ENCODE measurements at regions of chr4 and their contacts with region 1.

Region 1: GRCh38 chr4:85147439-85148076 is 181.1 kb upstream of the WDFY3 start:
- H3K4me3 Mint-ChIP-seq: no peak overlapping the region
- H3K27ac Mint-ChIP-seq: no peak overlapping the region
- H3K4me1 Mint-ChIP-seq: no peaks in the 10 kb centered on the region
- H3K27me3 Mint-ChIP-seq: peaks cover 10% of the 10 kb centered on the region

Region 2: DNA sequence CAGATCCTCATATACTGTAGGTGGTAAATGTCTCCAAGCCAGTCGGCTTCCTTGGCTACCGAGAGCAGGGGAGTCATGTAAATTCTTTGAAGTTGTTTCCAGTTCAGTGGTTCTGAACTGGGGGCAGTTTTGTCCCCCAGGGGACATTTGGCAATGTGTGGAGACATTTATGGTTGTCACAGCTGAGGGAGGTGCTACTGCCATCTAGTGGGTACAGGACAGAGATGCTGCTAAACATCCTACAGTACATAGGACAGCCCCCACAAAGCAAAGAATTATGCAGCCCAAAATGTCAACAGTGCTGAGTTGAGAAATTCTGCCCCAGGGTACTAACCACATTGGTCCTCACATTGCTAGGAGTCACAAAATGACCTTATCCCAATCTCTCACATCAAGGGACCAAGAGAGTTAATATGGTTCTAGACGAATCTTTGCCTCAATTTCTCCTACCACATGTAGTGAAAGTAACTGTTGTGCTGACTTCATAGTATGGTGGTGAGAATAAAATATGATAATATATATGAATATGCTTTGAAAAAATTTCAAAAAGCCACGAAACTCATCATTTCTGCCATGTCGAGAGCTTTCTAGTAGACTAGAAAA is 223.0 kb after region 1 on chr4:
- intact Hi-C with region 1: loop called (anchors 5 kb)
- H3K4me3 Mint-ChIP-seq: no peak overlapping the region
- H3K27ac Mint-ChIP-seq: no peak overlapping the region
- H3K4me1 Mint-ChIP-seq: no peaks in the 10 kb centered on the region
- H3K27me3 Mint-ChIP-seq: peaks cover 5% of the 10 kb centered on the region

Region 3: DNA sequence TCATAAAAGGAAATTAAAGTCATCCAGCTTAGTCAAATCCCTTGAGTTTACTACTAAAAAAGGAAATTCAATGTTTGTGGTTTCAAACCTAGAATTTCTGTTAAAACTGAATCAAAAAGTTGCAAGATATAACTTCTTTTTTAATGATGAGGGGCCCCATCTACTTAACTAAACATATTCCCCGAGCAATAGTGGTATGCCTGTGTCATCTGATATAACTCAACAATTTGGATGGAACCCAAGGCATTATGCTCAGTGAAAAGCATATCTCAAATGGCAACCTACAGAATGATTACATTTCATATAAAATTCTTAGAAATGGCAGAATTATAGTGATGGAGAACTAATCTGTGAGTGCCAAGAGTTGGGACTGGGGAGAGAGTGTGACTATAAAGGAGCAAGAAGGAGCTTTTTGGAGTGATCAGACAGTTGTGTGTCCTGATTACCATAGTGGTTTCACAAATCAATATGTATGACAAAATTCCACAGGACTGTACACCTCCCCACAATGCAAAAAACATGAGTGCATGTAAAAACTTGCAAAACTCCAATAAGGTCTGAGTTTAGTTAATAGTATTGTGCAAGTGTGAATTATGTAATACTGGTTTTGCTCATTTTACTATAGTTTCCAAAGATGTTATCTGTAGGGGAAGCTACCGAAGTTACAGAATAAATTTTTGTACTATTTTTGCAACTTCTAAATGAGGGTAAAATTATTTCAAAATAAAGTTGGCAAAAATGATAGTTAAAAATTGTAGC is 650.6 kb after region 1 on chr4:
- intact Hi-C with region 1: loop called (anchors 2 kb)
- H3K4me3 Mint-ChIP-seq: no peak overlapping the region
- H3K27ac Mint-ChIP-seq: no peak overlapping the region
- H3K4me1 Mint-ChIP-seq: peaks cover 6% of the 10 kb centered on the region
- H3K27me3 Mint-ChIP-seq: no peaks in the 10 kb centered on the region

Region 4: GRCh38 chr4:86664959-86665358 is 1517.4 kb after region 1 on chr4:
- intact Hi-C with region 1: no loop called
- H3K4me3 Mint-ChIP-seq: no peak overlapping the region
- H3K27ac Mint-ChIP-seq: no peak overlapping the region
- H3K4me1 Mint-ChIP-seq: peaks cover 6% of the 10 kb centered on the region
- H3K27me3 Mint-ChIP-seq: no peaks in the 10 kb centered on the region